ENCODE measurements at regions of chr21 and their contacts with region 1.

Region 1: GRCh38 chr21:37916310-37917051 is at the start of gene KCNJ6:
- DNase-seq: peak; percentile 7 to 29 (median 16)
- H3K4me3 ChIP-seq: no peak within 1 kb of the TSS
- H3K4me3 Mint-ChIP-seq: peak within 1 kb of the TSS in 1 of 2 donors; percentile 86
- H3K27ac ChIP-seq: no peak within 1 kb of the TSS
- H3K27ac Mint-ChIP-seq: no peak within 1 kb of the TSS
- H3K4me1 ChIP-seq: peaks cover 0 to 2% of the 10 kb centered on the region in 2 donors
- H3K4me1 Mint-ChIP-seq: peaks cover 6% of the 10 kb centered on the region
- H3K27me3 ChIP-seq: peaks cover 67 to 74% of the 10 kb centered on the region in 2 donors
- H3K27me3 Mint-ChIP-seq: peaks cover 52 to 77% (median 69%) of the 10 kb centered on the region in 3 donors
- CTCF ChIP-seq: peak; percentile 70
- polyA plus RNA-seq, gene KCNJ6: not detected

Region 2: DNA sequence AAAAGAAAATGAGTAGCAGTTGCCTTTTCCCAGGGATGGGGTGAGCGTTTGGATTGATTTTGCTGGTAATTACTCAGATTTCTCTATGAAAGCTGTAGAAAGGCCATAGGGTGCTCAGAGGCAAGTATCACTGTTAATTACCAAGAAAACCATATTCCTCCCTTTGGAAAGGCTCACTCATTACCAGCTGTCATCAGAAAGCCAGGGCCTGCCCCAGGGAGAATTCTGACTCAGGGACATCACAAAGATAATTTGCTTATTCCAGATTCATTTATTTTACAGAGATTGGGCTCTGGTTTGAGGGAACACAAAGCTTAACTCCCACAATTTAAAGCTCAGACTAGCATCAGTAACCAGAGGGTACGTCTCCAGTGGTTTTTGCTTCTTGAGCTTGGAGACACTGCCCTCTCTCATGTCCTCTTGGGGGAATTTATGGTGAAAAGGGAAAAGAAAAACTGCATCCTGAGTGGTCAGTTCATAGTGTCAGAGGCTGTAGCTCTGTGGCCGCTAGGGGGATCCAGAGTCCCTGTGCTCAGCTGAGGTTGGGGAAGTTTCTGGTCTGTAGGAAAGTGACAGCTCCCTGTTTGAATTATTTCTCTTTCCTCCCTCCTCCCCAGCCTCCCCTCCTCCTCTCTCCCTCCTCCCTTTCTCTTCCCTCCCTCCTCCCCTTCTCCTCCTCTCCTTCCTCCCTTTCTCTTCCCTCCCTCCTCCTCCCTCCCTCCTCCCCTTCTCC is 204.5 kb before region 1 on chr21:
- intact Hi-C with region 1: loop called in 1 of 2 experiments (anchors 5 kb)
- DNase-seq: peak; percentile 33 to 56 (median 54)
- H3K4me3 ChIP-seq: no peak overlapping the region
- H3K4me3 Mint-ChIP-seq: no peak overlapping the region
- H3K27ac ChIP-seq: no peak overlapping the region
- H3K27ac Mint-ChIP-seq: no peak overlapping the region
- H3K4me1 ChIP-seq: no peaks in the 10 kb centered on the region
- H3K4me1 Mint-ChIP-seq: no peaks in the 10 kb centered on the region
- H3K27me3 ChIP-seq: peaks cover 2 to 4% of the 10 kb centered on the region in 2 donors
- H3K27me3 Mint-ChIP-seq: peaks cover 6 to 21% (median 8%) of the 10 kb centered on the region in 3 donors
- CTCF ChIP-seq: peak; percentile 80

Region 3: GRCh38 chr21:37758982-37759381 is 157.5 kb before region 1 on chr21:
- intact Hi-C with region 1: loop called (anchors 2 to 5 kb)
- DNase-seq: peak; percentile 15 to 41 (median 35)
- H3K4me3 ChIP-seq: no peak overlapping the region
- H3K4me3 Mint-ChIP-seq: no peak overlapping the region
- H3K27ac ChIP-seq: no peak overlapping the region
- H3K27ac Mint-ChIP-seq: no peak overlapping the region
- H3K4me1 ChIP-seq: no peaks in the 10 kb centered on the region
- H3K4me1 Mint-ChIP-seq: no peaks in the 10 kb centered on the region
- H3K27me3 ChIP-seq: no peaks in the 10 kb centered on the region
- H3K27me3 Mint-ChIP-seq: peaks cover 0 to 6% (median 3%) of the 10 kb centered on the region in 3 donors
- CTCF ChIP-seq: peak; percentile 71

Measured in CD14-positive monocyte (primary cell).